ENCODE measurements at regions of chr1 and their contacts with region 1.

Region 1: DNA sequence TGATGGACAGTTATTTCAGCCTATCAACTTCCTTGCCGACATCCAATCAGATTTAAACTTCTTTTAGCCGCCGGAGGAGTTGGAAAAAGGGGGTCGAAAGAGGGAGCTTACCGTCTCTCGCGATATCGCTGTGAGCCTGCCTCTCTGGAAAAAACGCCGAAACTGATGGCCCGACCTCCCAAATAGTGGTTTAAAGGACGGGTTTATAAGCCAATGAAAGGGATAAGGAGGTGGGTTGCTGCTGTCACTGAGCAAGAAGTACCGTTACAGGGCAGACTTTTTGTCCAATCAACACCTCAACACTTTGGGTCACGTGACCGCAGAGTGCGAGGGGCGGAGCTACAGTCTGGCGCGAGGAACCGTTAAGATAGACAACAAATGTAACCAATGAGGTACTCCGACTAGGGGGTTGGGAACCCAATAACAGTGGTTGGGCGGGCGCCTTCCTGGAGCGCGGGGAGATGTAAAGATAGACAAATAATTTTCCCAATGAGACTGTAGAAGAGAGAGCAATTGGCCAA is at the start of gene RBM15:
- DNase-seq: peak; percentile 90 to 100 (median 95)
- ATAC-seq: peak; percentile 71
- H3K4me3 ChIP-seq: peak within 1 kb of the TSS; percentile 93
- H3K4me3 Mint-ChIP-seq: no peak within 1 kb of the TSS
- H3K27ac ChIP-seq: peak within 1 kb of the TSS; percentile 98 to 100
- H3K27ac Mint-ChIP-seq: no peak within 1 kb of the TSS
- H3K4me1 ChIP-seq: peaks cover 33% of the 10 kb centered on the region
- H3K4me1 Mint-ChIP-seq: peaks cover 59% of the 10 kb centered on the region
- H3K27me3 ChIP-seq: no peaks in the 10 kb centered on the region
- H3K27me3 Mint-ChIP-seq: no peaks in the 10 kb centered on the region
- CTCF ChIP-seq: no peak
- total RNA-seq, gene RBM15: 49.4 to 49.7 TPM

Region 2: DNA sequence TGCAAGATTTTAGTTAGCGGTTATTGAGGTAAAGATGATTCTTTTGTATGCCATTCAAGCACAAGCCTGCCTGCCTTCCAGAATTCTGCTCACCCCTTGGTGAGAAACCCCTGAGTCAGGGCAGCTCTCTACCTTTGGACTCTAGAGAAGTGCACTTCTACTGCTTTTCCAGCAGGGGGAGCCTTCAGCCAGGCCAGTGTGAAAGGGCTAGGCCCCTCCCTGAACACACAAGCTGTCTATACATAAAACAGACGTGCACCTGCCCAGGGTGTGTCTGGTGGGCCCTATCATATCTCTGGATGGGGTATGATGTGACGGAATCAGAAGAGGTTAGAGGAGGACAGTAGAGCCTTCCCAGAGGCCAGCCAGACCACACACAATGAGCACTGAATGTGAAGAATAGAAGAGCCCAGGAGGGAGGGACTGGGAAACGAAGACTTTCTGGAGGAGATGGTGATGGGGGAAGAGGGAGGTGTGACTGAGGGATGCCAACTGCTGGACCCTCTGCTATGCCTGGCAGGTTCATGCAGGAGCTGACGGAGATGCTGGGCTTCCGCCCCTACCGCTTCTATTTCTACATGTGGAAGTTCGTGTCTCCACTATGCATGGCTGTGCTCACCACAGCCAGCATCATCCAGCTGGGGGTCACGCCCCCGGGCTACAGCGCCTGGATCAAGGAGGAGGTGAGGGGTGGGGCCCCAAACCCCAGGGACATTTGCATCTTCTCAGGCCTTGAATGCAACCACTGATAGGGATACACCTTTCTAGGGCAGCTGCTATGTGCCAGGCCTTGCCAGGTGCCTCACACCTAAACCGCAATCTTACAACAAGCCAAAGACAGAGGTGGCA is 141.8 kb before region 1 on chr1:
- CTCF ChIA-PET with region 1: interaction called, 10 read pairs
- POLR2A ChIA-PET with region 1: interaction called, 39 read pairs
- intact Hi-C with region 1: loop called in 1 of 2 experiments (anchors 2 kb)
- DNase-seq: peak; percentile 24 to 75 (median 38)
- ATAC-seq: peak; percentile 99
- H3K4me3 ChIP-seq: no peak overlapping the region
- H3K4me3 Mint-ChIP-seq: no peak overlapping the region
- H3K27ac ChIP-seq: no peak overlapping the region
- H3K27ac Mint-ChIP-seq: no peak overlapping the region
- H3K4me1 ChIP-seq: no peaks in the 10 kb centered on the region
- H3K4me1 Mint-ChIP-seq: no peaks in the 10 kb centered on the region
- H3K27me3 ChIP-seq: no peaks in the 10 kb centered on the region
- H3K27me3 Mint-ChIP-seq: no peaks in the 10 kb centered on the region
- CTCF ChIP-seq: peak; percentile 96

Region 3: DNA sequence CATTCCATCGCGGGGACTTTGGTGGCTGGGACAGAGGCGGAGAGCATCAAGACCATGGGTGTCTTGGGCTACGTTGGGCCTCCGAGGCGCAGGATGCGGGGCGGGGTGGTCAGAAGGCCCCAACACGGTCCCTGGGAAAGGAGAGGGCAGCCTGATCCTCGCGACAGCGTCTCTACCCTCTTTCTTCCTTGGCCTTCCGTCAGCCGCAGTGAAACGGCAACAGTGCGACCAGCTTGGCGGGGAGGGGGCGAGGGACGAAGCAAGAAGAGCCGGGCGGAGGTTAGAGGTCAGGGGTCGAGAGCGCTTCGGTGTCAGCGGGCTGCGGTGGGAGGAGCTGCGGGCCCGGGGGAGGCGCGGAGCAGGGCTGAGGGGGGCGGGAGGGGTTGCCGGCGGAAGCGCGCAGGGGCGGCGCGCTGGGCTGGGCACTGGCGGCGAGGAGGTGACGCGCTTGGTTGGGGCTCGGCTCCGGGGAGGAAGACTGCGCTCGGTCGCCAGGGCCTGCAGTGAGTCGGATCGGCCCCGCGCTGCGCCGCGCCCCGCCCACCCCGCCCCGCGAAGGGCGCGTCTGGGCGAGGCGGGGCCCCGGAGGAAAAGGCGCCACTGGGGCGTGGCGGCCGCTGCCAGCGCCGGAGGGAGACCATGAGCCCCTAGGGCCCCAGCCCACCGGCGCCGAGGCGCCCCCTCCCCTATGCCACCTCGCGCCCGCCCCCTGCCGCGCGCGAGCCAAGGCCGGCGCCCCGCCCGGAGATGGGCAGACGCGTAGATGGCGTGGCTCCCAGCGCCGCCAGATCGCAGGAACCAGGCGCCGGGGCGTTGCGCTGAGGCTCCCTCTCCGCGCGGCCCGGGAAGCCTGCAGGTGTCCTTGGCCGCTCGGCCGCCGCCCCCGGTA is 129.0 kb before region 1 on chr1 and contains the start of gene KCNC4:
- CTCF ChIA-PET with region 1: interaction called, 62 read pairs
- POLR2A ChIA-PET with region 1: interaction called, 199 read pairs
- intact Hi-C with region 1: loop called (anchors 1 kb)
- DNase-seq: peak; percentile 86 to 98 (median 92)
- ATAC-seq: peak; percentile 85
- H3K4me3 ChIP-seq: peak within 1 kb of the TSS; percentile 70
- H3K4me3 Mint-ChIP-seq: peak within 1 kb of the TSS; percentile 94
- H3K27ac ChIP-seq: peak within 1 kb of the TSS; percentile 84 to 86
- H3K27ac Mint-ChIP-seq: peak within 1 kb of the TSS; percentile 94
- H3K4me1 ChIP-seq: peaks cover 50% of the 10 kb centered on the region
- H3K4me1 Mint-ChIP-seq: peaks cover 66% of the 10 kb centered on the region
- H3K27me3 ChIP-seq: no peaks in the 10 kb centered on the region
- H3K27me3 Mint-ChIP-seq: no peaks in the 10 kb centered on the region
- CTCF ChIP-seq: no peak
- total RNA-seq, gene KCNC4: 16.5 to 17.7 TPM

Region 4: DNA sequence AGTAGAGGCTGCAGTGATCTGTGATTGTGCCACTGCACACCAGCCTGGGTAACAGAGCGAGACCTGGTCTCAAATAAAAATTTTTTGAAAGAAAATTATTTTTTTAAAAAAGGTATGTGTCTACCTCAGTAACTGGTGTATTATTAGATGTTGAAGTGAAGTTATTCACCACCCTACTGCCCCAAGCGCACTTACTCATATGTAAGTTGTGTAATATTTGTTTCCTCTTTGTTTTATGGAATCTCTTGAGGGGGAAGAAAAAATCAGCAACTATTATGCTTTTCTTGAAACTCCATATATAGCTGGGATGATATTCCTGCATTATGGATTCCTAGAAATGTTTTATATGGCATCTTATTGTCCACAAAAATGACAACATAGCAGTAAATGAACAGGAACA is 21.5 kb after region 1 on chr1:
- CTCF ChIA-PET with region 1: no interaction called
- POLR2A ChIA-PET with region 1: interaction called, 13 read pairs
- intact Hi-C with region 1: no loop called
- DNase-seq: no peak
- ATAC-seq: no peak
- H3K4me3 ChIP-seq: no peak overlapping the region
- H3K4me3 Mint-ChIP-seq: no peak overlapping the region
- H3K27ac ChIP-seq: no peak overlapping the region
- H3K27ac Mint-ChIP-seq: no peak overlapping the region
- H3K4me1 ChIP-seq: no peaks in the 10 kb centered on the region
- H3K4me1 Mint-ChIP-seq: peaks cover 17% of the 10 kb centered on the region
- H3K27me3 ChIP-seq: no peaks in the 10 kb centered on the region
- H3K27me3 Mint-ChIP-seq: no peaks in the 10 kb centered on the region
- CTCF ChIP-seq: no peak

Region 5: GRCh38 chr1:110407260-110408210 is 68.6 kb after region 1 on chr1 and contains the start of gene LAMTOR5:
- CTCF ChIA-PET with region 1: interaction called, 11 read pairs
- POLR2A ChIA-PET with region 1: interaction called, 61 read pairs
- intact Hi-C with region 1: loop called (anchors 1 to 2 kb)
- DNase-seq: peak; percentile 79 to 95 (median 86)
- ATAC-seq: peak; percentile 94
- H3K4me3 ChIP-seq: peak within 1 kb of the TSS; percentile 90
- H3K4me3 Mint-ChIP-seq: peak within 1 kb of the TSS; percentile 99
- H3K27ac ChIP-seq: peak within 1 kb of the TSS; percentile 84 to 88
- H3K27ac Mint-ChIP-seq: peak within 1 kb of the TSS; percentile 99
- H3K4me1 ChIP-seq: peaks cover 26% of the 10 kb centered on the region
- H3K4me1 Mint-ChIP-seq: peaks cover 38% of the 10 kb centered on the region
- H3K27me3 ChIP-seq: no peaks in the 10 kb centered on the region
- H3K27me3 Mint-ChIP-seq: no peaks in the 10 kb centered on the region
- CTCF ChIP-seq: no peak
- total RNA-seq, gene LAMTOR5: 105 to 108 TPM

Region 6: DNA sequence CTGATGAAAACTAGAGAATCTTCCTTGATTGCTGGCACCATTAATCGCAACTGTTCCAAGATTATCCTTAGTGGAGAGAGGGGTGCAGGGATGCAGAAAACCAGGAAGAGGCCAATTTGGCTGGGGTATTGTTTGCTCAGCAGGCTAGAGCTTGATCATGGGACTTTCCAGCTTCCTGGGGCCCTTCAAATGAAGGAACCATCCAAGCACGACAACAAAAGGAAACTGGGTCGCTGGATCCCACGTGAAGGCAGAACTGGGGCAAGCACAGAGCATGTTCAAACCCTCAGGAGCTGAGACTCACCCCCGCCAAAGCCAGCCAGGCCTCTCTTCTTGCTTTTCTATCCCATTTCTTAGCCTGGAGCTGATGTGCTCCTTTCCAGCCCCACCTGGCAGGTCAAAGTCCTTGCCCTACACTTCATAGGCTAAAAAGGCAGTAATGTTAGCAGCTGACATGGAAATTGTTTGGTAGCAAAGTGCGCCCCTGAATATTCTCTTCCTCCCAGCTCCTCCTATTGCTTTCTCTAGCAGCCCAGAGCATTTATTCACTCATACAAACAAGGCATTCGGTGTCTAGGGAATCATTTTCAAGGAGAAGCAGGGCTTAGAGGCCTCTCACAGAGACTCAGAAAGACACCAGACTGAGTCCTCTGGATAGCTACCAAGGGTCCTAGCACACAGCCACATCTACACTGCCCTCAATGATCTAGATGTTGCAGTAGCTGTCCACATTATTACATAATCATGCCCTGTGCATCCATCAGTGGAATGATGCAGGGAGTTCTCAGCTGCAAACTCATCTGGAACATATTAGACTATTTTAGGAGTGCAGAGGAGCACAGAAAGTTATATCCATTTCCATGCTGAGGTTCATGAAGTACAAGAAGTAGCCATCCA is 255.8 kb after region 1 on chr1:
- CTCF ChIA-PET with region 1: no interaction called
- POLR2A ChIA-PET with region 1: no interaction called
- intact Hi-C with region 1: no loop called
- DNase-seq: no peak
- ATAC-seq: no peak
- H3K4me3 ChIP-seq: no peak overlapping the region
- H3K4me3 Mint-ChIP-seq: no peak overlapping the region
- H3K27ac ChIP-seq: no peak overlapping the region
- H3K27ac Mint-ChIP-seq: no peak overlapping the region
- H3K4me1 ChIP-seq: no peaks in the 10 kb centered on the region
- H3K4me1 Mint-ChIP-seq: no peaks in the 10 kb centered on the region
- H3K27me3 ChIP-seq: peaks cover 0 to 3% of the 10 kb centered on the region in 2 experiments
- H3K27me3 Mint-ChIP-seq: peaks cover 6% of the 10 kb centered on the region
- CTCF ChIP-seq: no peak

Region 7: DNA sequence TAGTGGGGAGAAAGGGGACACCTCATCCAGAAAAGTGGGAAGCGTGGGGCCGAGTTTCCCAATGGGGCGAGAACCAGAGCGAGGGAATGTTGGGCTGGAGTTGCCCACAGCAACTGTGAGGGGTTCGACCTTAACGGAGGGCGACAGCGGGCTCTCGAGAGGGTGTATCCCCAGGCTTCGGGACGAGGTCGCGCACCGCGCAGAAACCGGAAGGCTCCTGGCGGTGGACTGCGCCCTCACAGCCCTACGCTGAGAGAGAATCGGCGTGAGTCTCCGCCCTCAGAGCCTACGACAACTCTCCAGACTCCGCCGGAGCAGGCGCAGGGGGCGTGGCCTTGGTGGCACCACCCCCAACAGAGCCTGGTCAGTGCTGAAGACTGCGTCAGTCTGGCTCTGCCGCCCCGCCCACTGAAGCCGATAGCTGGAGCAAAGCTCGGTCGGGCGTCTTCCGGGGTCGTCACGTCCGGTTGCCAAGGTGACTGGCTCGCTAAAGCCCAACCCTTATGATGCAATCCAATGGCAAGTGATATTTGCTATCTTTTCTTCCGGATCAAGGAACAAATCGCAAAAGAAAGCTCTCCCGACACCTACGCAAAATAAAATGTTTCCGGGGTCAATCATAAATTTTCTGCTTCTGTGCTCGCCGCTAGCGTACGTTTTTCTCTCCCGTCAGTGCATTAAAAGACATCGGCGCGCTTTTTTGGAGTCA is 624.9 kb after region 1 on chr1 and contains the start of gene LRIF1:
- CTCF ChIA-PET with region 1: no interaction called
- POLR2A ChIA-PET with region 1: interaction called, 4 read pairs
- intact Hi-C with region 1: loop called in 1 of 2 experiments (anchors 10 kb)
- DNase-seq: peak; percentile 99 to 100 (median 100)
- ATAC-seq: peak; percentile 95
- H3K4me3 ChIP-seq: peak within 1 kb of the TSS; percentile 76
- H3K4me3 Mint-ChIP-seq: peak within 1 kb of the TSS; percentile 90
- H3K27ac ChIP-seq: peak within 1 kb of the TSS; percentile 94 to 100
- H3K27ac Mint-ChIP-seq: peak within 1 kb of the TSS; percentile 93
- H3K4me1 ChIP-seq: peaks cover 12% of the 10 kb centered on the region
- H3K4me1 Mint-ChIP-seq: peaks cover 36% of the 10 kb centered on the region
- H3K27me3 ChIP-seq: peaks cover 4 to 9% of the 10 kb centered on the region in 2 experiments
- H3K27me3 Mint-ChIP-seq: peaks cover 15% of the 10 kb centered on the region
- CTCF ChIP-seq: no peak
- total RNA-seq, gene LRIF1: 1.6 to 1.8 TPM